Heart left ventricle (tissue), 16 donors: ENCODE measurements at regions of chr22 and their contacts with region 1.

Region 1: DNA sequence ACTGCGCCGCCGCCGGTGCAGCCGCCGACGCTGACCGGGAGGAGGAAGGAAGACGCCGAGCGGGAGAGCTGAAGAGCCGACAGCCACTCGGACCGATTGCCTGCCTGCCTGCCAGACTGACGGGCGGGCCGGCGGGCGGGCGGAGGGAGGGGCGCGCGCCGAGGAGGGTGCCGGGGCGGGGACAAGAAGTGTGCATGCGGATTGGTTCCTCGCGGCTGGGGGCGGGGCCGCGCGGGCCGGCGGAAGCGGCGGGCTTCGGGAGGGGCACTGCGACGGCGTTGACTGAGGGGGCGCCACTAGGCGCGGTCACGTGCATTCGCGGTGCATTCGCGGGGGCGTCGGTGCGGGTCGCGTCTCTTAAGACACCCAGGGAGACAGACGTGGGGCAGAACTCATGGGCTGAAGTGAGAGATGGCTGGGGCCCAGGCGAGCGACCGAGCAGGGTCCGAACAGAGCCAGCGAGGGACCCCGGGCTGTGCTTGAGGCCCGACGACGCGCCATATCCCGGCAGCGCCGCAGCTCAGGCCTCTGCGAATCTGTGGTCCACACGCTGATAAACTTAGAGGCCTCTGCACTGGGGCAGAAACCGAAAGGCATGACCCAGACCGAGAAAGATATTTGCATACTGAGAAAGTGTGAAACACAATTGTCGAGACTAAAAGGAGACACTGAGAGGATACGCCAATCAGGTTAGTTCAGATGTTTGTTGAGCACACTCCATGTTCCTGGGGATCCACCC is at the start of gene MAPK1:
- DNase-seq: peak; percentile 95 to 97 (median 95)
- ATAC-seq: peak; percentile 95 to 99 (median 99)
- H3K4me3 ChIP-seq: peak within 1 kb of the TSS; percentile 81 to 98 (median 90)
- H3K27ac ChIP-seq: peak within 1 kb of the TSS; percentile 74 to 96 (median 88)
- H3K4me1 ChIP-seq: peaks cover 5 to 51% (median 39%) of the 10 kb centered on the region in 12 donors
- H3K27me3 ChIP-seq: no peaks in the 10 kb centered on the region
- CTCF ChIP-seq: peak in 9 of 12 donors; percentile 11 to 67 (median 50)
- POLR2A ChIP-seq: peak in 1 of 2 donors; percentile 88
- total RNA-seq, gene MAPK1: 30.1 to 140 (median 106) TPM

Region 2: GRCh38 chr22:21714426-21715185 is 153.1 kb before region 1 on chr22:
- intact Hi-C with region 1: no loop called
- DNase-seq: no peak
- ATAC-seq: peak in 1 of 4 donors; percentile 16
- H3K4me3 ChIP-seq: no peak overlapping the region
- H3K27ac ChIP-seq: no peak overlapping the region
- H3K4me1 ChIP-seq: peaks cover 0 to 19% (median 10%) of the 10 kb centered on the region in 12 donors
- H3K27me3 ChIP-seq: no peaks in the 10 kb centered on the region
- CTCF ChIP-seq: no peak
- POLR2A ChIP-seq: no peak

Region 3: DNA sequence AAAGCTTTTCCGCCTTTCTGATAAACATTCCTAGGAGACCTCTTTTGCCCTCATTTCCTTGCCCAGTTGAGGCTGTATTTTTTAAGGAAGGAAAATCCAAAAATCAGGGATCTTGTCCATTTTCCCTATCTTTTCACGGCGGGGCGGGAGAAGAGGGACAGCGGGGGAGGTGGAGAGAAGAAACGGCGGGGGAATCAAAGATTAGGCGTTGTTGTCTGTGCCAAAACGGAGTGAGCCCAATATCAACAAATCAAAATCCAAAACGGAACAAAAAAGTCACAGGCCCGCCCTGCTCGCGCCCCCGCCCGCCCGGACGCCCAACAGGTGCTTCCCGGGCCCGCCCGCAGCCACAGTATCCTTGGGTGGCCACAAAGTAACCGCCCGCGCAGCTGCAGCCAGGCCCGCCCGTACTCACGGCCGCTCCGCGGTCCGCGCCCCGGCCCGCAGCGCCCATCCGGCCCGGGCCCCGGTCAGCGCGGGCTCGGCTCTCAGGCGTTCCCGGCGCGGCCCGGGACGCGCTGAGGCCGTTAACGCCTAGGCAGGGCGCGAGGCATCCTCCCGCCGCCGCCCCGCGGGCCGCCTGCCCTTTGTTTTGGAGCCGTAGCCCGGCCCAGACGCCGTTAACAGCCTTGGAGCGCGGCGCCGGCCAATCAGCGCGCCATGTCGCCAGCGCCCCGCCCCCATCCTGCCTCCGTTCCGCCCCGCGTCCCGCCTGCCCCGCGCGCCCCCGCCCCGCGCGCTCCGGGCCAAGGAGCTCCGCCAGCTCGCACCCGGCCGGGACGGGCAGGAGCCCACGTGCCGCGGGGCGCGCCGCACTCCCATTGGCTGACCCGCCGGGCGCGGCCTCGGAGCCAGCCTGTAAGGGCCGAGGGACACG is 132.3 kb before region 1 on chr22 and contains the start of gene YPEL1:
- intact Hi-C with region 1: loop called in 4 of 10 experiments (anchors 1 to 10 kb)
- DNase-seq: peak; percentile 97 to 99 (median 98)
- ATAC-seq: peak; percentile 94 to 99 (median 98)
- H3K4me3 ChIP-seq: peak within 1 kb of the TSS; percentile 42 to 87 (median 70)
- H3K27ac ChIP-seq: peak within 1 kb of the TSS; percentile 41 to 87 (median 74)
- H3K4me1 ChIP-seq: peaks cover 0 to 18% (median 8%) of the 10 kb centered on the region in 12 donors
- H3K27me3 ChIP-seq: no peaks in the 10 kb centered on the region
- CTCF ChIP-seq: peak in 1 of 12 donors; percentile 4
- POLR2A ChIP-seq: peak; percentile 92 to 99
- total RNA-seq, gene YPEL1: 6.3 to 10.0 (median 7.5) TPM

Region 4: GRCh38 chr22:21778705-21779363 is 88.9 kb before region 1 on chr22:
- intact Hi-C with region 1: loop called in 2 of 10 experiments (anchors 5 to 10 kb)
- DNase-seq: no peak
- ATAC-seq: peak in 1 of 4 donors; percentile 33
- H3K4me3 ChIP-seq: no peak overlapping the region
- H3K27ac ChIP-seq: no peak overlapping the region
- H3K4me1 ChIP-seq: peaks cover 0 to 7% (median 2%) of the 10 kb centered on the region in 12 donors
- H3K27me3 ChIP-seq: no peaks in the 10 kb centered on the region
- CTCF ChIP-seq: no peak
- POLR2A ChIP-seq: no peak

Region 5: GRCh38 chr22:21791635-21792625 is 75.8 kb before region 1 on chr22:
- intact Hi-C with region 1: loop called in 2 of 10 experiments (anchors 5 kb)
- DNase-seq: no peak
- ATAC-seq: no peak
- H3K4me3 ChIP-seq: no peak overlapping the region
- H3K27ac ChIP-seq: no peak overlapping the region
- H3K4me1 ChIP-seq: peaks cover 0 to 7% (median under 1%) of the 10 kb centered on the region in 12 donors
- H3K27me3 ChIP-seq: no peaks in the 10 kb centered on the region
- CTCF ChIP-seq: no peak
- POLR2A ChIP-seq: no peak

Region 6: GRCh38 chr22:21807544-21808529 is 59.9 kb before region 1 on chr22:
- intact Hi-C with region 1: loop called in 1 of 10 experiments (anchors 10 kb)
- DNase-seq: no peak
- ATAC-seq: no peak
- H3K4me3 ChIP-seq: no peak overlapping the region
- H3K27ac ChIP-seq: no peak overlapping the region
- H3K4me1 ChIP-seq: peaks cover 0 to 19% (median 7%) of the 10 kb centered on the region in 12 donors
- H3K27me3 ChIP-seq: no peaks in the 10 kb centered on the region
- CTCF ChIP-seq: no peak
- POLR2A ChIP-seq: no peak

Region 7: GRCh38 chr22:21816787-21817496 is 50.8 kb before region 1 on chr22:
- intact Hi-C with region 1: loop called in 4 of 10 experiments (anchors 5 kb)
- DNase-seq: no peak
- ATAC-seq: peak; percentile 62 to 92 (median 88)
- H3K4me3 ChIP-seq: peak overlapping the region in 4 of 12 donors; percentile 2 to 29 (median 3)
- H3K27ac ChIP-seq: peak overlapping the region in 10 of 12 donors; percentile 28 to 90 (median 59)
- H3K4me1 ChIP-seq: peaks cover 5 to 56% (median 36%) of the 10 kb centered on the region in 12 donors
- H3K27me3 ChIP-seq: no peaks in the 10 kb centered on the region
- CTCF ChIP-seq: no peak
- POLR2A ChIP-seq: no peak

Region 8: DNA sequence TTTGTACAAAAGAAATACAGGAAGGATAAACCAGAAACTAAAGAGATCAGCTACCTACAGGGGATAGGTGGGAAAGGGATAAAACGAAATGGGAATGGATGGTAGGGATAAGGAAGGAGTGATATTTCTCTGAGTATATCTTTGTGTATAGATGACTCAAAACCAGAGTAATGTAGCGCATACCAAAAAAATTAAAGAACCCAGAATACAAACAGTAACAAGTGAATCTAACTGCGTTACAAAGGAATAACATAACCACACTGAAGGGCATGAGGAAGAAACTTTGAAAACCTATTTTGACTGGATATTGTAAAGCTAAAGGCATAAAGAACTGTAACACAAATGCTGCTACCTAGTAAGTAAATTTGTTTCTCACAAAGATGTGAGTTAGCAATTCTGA is 38.2 kb before region 1 on chr22:
- intact Hi-C with region 1: loop called in 1 of 10 experiments (anchors 5 kb)
- DNase-seq: no peak
- ATAC-seq: no peak
- H3K4me3 ChIP-seq: no peak overlapping the region
- H3K27ac ChIP-seq: no peak overlapping the region
- H3K4me1 ChIP-seq: peaks cover 5 to 72% (median 47%) of the 10 kb centered on the region in 12 donors
- H3K27me3 ChIP-seq: no peaks in the 10 kb centered on the region
- CTCF ChIP-seq: no peak
- POLR2A ChIP-seq: no peak